Activated naive CD4-positive, alpha-beta T cell treated with anti-CD3 and anti-CD28 coated beads for 36 hours (primary cell): ENCODE measurements at regions of chr19 and their contacts with region 1.

Region 1: DNA sequence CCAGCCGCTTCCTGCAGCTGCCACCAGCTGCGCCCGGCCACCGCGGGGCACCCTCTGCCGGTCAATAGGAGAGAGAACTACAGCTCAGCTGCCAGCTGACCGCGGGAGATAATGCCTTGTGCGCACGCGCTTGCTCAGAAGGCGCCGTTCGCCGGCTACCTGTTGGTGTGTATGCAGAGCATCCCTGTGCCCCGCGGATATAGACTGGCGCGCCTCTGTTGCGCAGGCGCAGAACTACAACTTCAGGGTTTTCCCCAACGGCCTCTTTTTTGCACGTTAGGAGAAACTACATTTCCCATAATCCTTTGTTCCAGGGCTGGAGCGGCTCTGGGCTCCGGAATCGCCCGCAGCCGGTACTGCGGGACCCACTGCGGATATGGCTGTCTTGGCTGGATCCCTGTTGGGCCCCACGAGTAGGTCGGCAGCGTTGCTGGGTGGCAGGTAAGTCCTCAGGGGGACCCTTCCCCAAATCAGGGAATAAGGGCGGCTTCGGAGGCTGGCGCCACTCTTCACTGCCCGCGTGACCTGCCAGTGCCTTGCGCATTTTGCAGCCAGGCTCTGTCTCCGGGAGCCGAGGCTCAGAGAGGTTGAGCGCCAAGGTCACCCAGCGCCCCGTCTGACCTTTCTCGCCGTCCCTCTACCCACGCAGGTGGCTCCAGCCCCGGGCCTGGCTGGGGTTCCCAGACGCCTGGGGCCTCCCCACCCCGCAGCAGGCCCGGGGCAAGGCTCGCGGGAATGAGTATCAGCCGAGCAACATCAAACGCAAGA is at the start of gene MRPL34:
- DNase-seq: peak; percentile 97
- H3K4me3 Mint-ChIP-seq: peak within 1 kb of the TSS; percentile 89
- H3K27ac Mint-ChIP-seq: peak within 1 kb of the TSS; percentile 88
- H3K4me1 Mint-ChIP-seq: peaks cover 48% of the 10 kb centered on the region
- H3K27me3 Mint-ChIP-seq: no peaks in the 10 kb centered on the region
- total RNA-seq, gene MRPL34: 84.2 to 92.2 TPM

Region 2: DNA sequence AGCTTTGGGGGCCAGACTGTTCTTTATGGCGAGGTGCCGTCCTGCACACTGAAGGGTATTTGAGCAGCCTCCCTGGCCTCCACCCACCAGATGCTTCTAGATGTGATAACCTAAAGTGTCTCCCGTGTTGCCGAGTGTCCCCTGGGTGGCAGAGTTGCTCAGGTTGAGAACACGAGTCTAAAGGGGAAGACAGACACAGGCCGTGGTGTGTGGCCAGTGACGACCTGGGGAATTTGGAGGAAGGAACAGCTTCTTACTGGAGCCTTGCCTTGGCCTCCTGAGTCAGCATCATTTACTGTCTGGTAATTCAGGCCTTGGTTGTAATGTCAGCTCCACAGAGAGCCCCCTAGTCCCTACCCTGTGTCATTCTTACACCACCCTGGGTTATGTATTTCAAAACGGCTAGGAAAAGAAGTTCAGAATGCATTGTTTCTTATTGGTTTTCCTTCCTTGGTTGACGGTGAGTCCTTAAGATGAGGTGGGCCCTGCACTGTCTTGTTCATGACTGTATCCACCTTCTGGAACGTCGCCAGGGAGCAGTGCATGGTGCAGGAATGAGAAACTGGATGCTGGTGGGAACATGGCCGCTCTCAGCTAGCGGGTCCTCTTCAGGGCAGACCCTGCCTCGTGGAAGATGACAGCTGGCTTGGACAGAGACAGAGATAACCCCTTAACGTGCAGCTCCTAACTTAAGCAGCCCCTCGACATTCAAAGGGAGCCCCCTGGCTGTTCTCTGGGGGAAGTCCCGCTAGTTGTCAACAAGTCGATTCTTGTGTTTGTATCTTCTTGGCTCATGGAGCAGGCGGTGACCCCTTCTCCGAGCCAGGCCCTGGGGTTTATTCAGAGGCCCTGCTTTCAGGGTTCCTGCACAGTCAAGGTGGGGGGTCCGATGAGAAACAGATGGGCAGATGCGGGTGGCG is 469.3 kb before region 1 on chr19:
- CTCF ChIA-PET with region 1: no interaction called
- intact Hi-C with region 1: loop called (anchors 10 kb)
- DNase-seq: peak; percentile 48
- H3K4me3 Mint-ChIP-seq: no peak overlapping the region
- H3K27ac Mint-ChIP-seq: no peak overlapping the region
- H3K4me1 Mint-ChIP-seq: peaks cover 16% of the 10 kb centered on the region
- H3K27me3 Mint-ChIP-seq: no peaks in the 10 kb centered on the region

Region 3: GRCh38 chr19:17201913-17202648 is 103.6 kb before region 1 on chr19:
- CTCF ChIA-PET with region 1: no interaction called
- intact Hi-C with region 1: no loop called
- DNase-seq: peak; percentile 39
- H3K4me3 Mint-ChIP-seq: no peak overlapping the region
- H3K27ac Mint-ChIP-seq: no peak overlapping the region
- H3K4me1 Mint-ChIP-seq: no peaks in the 10 kb centered on the region
- H3K27me3 Mint-ChIP-seq: no peaks in the 10 kb centered on the region

Region 4: GRCh38 chr19:17226002-17226933 is 79.4 kb before region 1 on chr19 and contains the start of gene OCEL1:
- CTCF ChIA-PET with region 1: no interaction called
- intact Hi-C with region 1: loop called (anchors 1 kb)
- DNase-seq: peak; percentile 98
- H3K4me3 Mint-ChIP-seq: peak within 1 kb of the TSS; percentile 83
- H3K27ac Mint-ChIP-seq: peak within 1 kb of the TSS; percentile 90
- H3K4me1 Mint-ChIP-seq: peaks cover 5% of the 10 kb centered on the region
- H3K27me3 Mint-ChIP-seq: no peaks in the 10 kb centered on the region
- total RNA-seq, gene OCEL1: 8.7 to 9.3 TPM

Region 5: DNA sequence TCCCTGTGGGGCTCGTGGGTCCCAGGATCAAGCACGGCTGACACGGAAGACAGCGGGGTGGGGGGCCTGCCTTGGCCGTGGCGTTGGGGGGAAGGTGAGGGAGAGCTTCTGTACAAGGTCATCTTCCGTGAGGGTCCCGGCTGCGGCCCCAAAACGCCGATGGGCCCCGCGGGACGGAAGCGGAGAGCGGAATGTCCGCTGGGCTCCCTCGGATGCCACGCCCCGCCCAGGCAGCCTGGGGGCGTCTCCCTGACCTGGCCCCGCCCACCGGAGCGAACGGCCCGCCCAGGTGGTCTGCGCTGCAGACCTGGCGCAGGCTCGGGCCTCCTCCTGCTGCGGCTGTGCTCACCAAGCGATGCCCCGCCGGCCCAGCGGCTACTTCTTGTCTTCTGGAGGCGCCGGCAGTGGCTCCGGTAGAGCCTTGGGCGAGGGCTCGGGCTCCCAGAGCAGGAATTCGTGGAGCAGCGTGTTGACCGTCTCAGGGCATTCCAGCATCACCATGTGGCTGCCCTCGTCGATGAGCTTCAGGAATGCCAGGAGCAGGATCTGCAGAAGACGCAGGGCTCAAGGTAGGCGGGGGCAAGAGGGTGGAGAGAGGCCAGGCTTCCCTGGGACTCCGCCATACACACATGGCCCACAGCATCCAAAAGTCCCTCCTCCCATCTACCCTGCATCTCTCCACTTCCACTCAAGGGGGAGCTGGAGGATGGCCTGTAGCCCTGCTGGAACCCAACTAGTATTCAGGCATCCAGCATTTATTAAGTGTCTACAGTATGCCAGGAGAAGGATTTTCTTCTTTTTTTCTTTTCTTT is 13.2 kb before region 1 on chr19:
- CTCF ChIA-PET with region 1: interaction called, 10 read pairs
- intact Hi-C with region 1: loop called (anchors 1 kb)
- DNase-seq: peak; percentile 88
- H3K4me3 Mint-ChIP-seq: peak overlapping the region; percentile 87
- H3K27ac Mint-ChIP-seq: peak overlapping the region; percentile 56
- H3K4me1 Mint-ChIP-seq: peaks cover 8% of the 10 kb centered on the region
- H3K27me3 Mint-ChIP-seq: no peaks in the 10 kb centered on the region

Region 6: DNA sequence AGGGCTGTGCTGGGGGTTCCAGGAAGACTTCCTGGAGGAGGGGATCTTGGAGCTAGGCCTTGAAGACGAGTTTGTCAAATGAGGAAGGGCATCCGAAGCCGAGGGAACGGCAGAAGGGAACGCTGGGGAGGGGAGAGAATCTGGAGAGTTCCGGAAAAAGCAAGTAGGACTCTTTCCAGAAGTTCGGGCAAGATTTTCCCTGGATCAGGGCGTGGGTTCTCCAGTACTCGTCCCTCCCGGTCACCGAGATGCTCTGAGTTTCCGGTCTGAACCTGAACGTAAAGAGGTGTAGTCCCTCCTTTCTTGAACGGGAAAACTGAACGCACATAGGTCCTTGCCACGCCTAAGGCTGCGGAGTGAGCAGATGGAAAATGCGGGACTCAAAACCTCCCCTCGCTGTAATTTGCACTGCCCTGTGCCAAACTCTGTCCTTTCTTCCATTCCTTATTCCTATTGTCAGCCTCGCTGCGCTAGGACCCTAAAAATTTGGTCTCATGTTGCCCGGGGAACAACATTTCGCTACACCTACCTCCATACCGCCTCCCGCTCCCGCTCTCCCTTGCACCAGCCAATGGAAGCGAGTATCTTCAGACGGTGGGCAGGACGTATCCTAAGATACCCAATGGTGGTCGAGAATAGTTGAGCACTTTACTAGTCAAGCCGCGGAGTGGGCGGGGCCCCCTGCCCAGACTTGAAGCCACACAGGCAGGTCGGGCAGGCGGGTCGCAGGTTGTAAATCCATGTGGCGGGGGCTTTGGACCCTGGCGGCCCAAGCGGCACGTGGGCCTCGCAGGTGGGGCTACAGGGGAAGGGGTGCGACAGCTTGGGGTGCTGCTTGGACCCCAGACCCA is 31.4 kb after region 1 on chr19 and contains the start of gene GTPBP3:
- CTCF ChIA-PET with region 1: interaction called, 4 read pairs
- intact Hi-C with region 1: loop called (anchors 1 kb)
- DNase-seq: peak; percentile 98
- H3K4me3 Mint-ChIP-seq: peak within 1 kb of the TSS; percentile 88
- H3K27ac Mint-ChIP-seq: peak within 1 kb of the TSS; percentile 93
- H3K4me1 Mint-ChIP-seq: peaks cover 28% of the 10 kb centered on the region
- H3K27me3 Mint-ChIP-seq: no peaks in the 10 kb centered on the region
- total RNA-seq, gene GTPBP3: 36.8 to 45.7 TPM

Region 7: DNA sequence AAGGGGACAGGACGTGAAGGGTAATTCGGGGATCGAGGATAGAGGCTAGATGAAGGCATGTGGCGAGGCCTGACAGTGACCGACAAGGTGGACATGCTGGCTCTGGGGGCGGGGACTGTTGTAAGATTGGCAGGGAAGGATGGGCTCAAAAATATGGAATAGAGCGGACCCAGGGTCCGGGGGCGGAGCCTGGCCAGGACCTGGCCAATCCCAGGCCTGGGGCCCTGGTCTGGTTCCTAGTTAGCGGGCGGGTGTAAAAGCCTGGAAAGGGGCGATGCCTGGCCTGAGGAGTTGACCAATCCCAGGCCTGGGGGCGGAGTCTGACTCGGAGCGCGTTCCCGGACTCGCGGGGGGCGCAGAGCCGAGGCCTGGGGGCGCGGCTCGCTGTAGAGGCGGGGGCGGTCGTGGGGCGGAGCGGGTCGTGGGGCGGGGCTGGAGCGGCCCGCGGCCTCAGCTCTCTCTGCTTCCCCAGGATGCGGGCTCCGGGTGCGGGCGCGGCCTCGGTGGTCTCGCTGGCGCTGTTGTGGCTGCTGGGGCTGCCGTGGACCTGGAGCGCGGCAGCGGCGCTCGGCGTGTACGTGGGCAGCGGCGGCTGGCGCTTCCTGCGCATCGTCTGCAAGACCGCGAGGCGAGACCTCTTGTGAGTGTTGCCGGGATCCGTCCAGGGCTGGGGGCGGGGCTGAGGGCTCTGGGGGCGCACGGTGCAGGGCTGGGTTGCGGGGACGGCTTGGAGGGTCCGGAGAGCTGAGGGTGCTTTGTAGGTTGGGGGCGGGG is 164.6 kb after region 1 on chr19 and contains the start of gene SLC27A1:
- CTCF ChIA-PET with region 1: no interaction called
- intact Hi-C with region 1: loop called (anchors 1 kb)
- DNase-seq: peak; percentile 90
- H3K4me3 Mint-ChIP-seq: peak within 1 kb of the TSS; percentile 84
- H3K27ac Mint-ChIP-seq: peak within 1 kb of the TSS; percentile 10
- H3K4me1 Mint-ChIP-seq: peaks cover 26% of the 10 kb centered on the region
- H3K27me3 Mint-ChIP-seq: no peaks in the 10 kb centered on the region
- total RNA-seq, gene SLC27A1: 1.2 to 1.7 TPM

Region 8: GRCh38 chr19:17747205-17748098 is 441.8 kb after region 1 on chr19:
- CTCF ChIA-PET with region 1: no interaction called
- intact Hi-C with region 1: loop called (anchors 1 kb)
- DNase-seq: peak; percentile 97
- H3K4me3 Mint-ChIP-seq: peak overlapping the region; percentile 63
- H3K27ac Mint-ChIP-seq: peak overlapping the region; percentile 56
- H3K4me1 Mint-ChIP-seq: peaks cover 40% of the 10 kb centered on the region
- H3K27me3 Mint-ChIP-seq: no peaks in the 10 kb centered on the region